ENCODE measurements at regions of chr4 and their contacts with region 1.

Region 1: GRCh38 chr4:70687821-70688794 is at the start of gene UTP3:
- DNase-seq: peak; percentile 95 to 97
- ATAC-seq: peak; percentile 97 to 99 (median 98)
- H3K4me3 ChIP-seq: peak within 1 kb of the TSS; percentile 65 to 96 (median 92)
- H3K27ac ChIP-seq: peak within 1 kb of the TSS; percentile 78 to 98 (median 94)
- H3K4me1 ChIP-seq: peaks cover 8 to 50% (median 33%) of the 10 kb centered on the region in 9 donors
- H3K27me3 ChIP-seq: no peaks in the 10 kb centered on the region
- CTCF ChIP-seq: peak; percentile 93 to 99 (median 98)
- total RNA-seq, gene UTP3: 13.9 to 20.4 (median 18.5) TPM

Region 2: GRCh38 chr4:70704331-70705145 is 16.4 kb after region 1 on chr4:
- intact Hi-C with region 1: loop called in 5 of 10 experiments (anchors 1 to 2 kb)
- DNase-seq: peak; percentile 86 to 87
- ATAC-seq: peak; percentile 87 to 93 (median 90)
- H3K4me3 ChIP-seq: peak overlapping the region; percentile 59 to 96 (median 84)
- H3K27ac ChIP-seq: peak overlapping the region; percentile 77 to 99 (median 97)
- H3K4me1 ChIP-seq: peaks cover 3 to 33% (median 17%) of the 10 kb centered on the region in 9 donors
- H3K27me3 ChIP-seq: no peaks in the 10 kb centered on the region
- CTCF ChIP-seq: peak in 8 of 9 donors; percentile 8 to 66 (median 38)

Region 3: GRCh38 chr4:70901984-70902576 is 214.0 kb after region 1 on chr4 and contains the start of gene MOB1B:
- intact Hi-C with region 1: loop called in 1 of 10 experiments (anchors 5 kb)
- DNase-seq: peak; percentile 87 to 93
- ATAC-seq: peak; percentile 96 to 98 (median 97)
- H3K4me3 ChIP-seq: peak within 1 kb of the TSS; percentile 74 to 99 (median 91)
- H3K27ac ChIP-seq: peak within 1 kb of the TSS; percentile 77 to 93 (median 89)
- H3K4me1 ChIP-seq: peaks cover 0 to 21% (median 10%) of the 10 kb centered on the region in 9 donors
- H3K27me3 ChIP-seq: no peaks in the 10 kb centered on the region
- CTCF ChIP-seq: peak; percentile 15 to 63 (median 46)
- total RNA-seq, gene MOB1B: 15.6 to 33.4 (median 20.3) TPM

Region 4: GRCh38 chr4:70993181-70994068 is 305.3 kb after region 1 on chr4 and contains the start of gene DCK:
- intact Hi-C with region 1: loop called in 2 of 10 experiments (anchors 1 to 2 kb)
- DNase-seq: peak; percentile 90 to 94
- ATAC-seq: peak; percentile 98 to 100 (median 99)
- H3K4me3 ChIP-seq: peak within 1 kb of the TSS; percentile 66 to 90 (median 80)
- H3K27ac ChIP-seq: peak within 1 kb of the TSS; percentile 49 to 93 (median 86)
- H3K4me1 ChIP-seq: peaks cover 0 to 54% (median 23%) of the 10 kb centered on the region in 9 donors
- H3K27me3 ChIP-seq: no peaks in the 10 kb centered on the region
- CTCF ChIP-seq: peak in 3 of 9 donors; percentile 7 to 18 (median 12)
- total RNA-seq, gene DCK: 4.7 to 9.3 (median 6.5) TPM

Measured in heart right ventricle (tissue), 16 donors.